ENCODE measurements at regions of chr9 and their contacts with region 1.

Region 1: DNA sequence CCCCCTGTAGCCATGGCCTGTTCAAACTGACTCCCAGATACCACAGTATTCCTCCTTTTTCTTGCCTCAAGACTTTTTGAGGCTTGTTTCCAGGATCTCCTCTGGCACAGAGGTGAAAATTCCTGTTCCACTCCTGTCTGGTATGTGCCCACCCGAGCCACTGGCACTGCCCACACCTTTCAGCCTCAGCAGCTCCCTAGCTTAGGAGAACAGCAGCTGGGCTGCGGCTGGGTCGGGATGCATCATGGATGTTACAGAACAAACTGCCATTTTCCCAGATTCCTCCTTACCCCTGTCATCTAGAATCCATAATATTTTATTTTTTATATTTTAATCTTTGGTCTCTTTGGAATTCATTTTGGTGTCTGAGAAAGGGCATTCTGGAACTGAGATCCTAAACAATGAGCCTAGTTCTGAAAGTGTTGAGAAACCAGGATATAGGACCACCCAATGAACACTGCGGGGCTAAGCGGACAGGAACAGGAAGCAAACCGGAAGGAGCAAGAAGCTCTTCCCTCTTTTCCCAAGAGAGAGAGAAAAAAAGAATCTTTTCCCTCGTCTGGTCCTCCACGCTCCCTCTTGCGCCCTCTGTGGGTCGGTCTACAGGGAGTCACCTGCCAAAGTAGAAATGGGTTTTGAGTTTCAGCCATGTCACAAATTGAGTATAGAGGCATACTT is 12.5 kb downstream of the OR2S2 start:
- DNase-seq: no peak

Region 2: GRCh38 chr9:35905912-35906679 is 39.4 kb before region 1 on chr9 and contains the start of gene HRCT1:
- intact Hi-C with region 1: loop called (anchors 1 kb)
- DNase-seq: peak; percentile 94
- total RNA-seq, gene HRCT1: 1.5 TPM